ENCODE measurements at regions of chr2 and their contacts with region 1.

Region 1: DNA sequence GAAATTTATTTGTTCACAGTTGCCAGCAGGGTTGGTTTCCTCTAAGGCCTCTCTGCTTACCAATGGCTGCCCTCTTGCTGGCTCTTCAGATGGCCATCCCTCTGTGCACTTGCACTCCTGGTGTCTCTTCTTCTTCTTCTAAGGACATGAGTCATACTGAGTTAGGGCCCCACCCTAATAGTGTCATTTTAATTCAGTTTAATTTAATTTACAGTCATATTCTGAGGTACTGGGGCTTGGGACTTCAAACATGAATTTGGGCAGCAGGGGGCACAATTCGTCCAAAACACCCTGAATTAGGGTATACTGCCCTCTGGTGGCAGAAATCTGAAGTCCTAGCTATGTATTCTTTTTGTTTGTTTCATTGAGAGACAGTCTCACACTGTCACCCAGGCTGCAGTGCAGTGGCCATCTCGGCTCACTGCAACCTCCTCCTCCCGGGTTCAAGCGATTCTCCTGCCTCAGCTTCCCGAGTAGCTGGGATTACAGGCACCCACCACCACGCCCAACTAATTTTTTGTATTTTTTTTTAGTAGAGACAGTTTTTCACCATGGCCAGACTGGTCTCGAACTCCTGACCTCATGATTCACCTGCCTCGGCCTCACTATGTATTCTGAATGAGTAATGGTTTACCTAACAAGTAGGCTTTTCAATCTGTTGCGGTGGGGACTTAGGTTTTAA is 19.8 kb downstream of the SLC4A1AP start:
- DNase-seq: peak; percentile 78 to 82
- H3K4me3 ChIP-seq: no peak overlapping the region
- H3K27ac ChIP-seq: peak overlapping the region; percentile 98
- H3K4me1 ChIP-seq: peaks cover 44% of the 10 kb centered on the region
- H3K27me3 ChIP-seq: no peaks in the 10 kb centered on the region
- CTCF ChIP-seq: peak; percentile 100

Region 2: DNA sequence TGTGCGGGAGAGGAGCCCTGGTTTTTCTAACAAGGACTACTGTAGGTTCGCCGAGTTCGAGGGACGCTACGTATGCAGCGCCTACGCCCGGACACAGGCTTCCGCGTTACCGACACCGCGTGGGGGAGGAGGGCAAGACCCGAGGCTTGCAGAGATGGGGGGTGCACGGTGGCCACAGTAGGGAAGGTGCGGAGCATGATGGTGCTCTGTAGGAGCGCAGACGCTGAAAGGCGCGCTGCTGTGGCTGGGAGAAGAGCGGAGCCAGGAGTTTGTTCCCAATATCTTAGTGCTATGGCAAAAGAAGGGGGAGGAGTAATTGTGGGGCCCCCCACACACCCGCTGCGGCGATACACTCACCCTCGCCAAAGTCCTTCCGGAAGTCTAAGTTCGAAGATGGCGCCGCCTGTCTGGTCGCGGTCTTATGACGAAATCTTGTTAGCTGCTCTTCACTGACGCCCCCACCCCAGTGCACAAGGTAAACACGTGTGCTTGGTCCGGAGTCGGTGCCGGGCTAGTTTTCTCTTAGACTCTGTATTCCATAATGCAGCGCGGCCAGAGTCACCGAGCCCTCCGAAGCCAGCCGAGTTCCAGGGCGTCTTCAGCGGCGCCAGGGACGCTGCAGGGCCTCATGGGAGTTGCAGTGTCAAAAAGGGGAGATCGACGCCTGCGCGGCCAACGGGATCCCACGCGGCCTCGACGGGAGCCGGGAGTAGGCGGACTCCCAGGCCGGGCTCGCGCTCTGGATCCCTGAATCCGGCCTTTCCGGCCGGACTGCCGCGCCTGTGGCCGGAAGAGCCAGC is 326.9 kb before region 1 on chr2 and contains the start of gene GTF3C2:
- CTCF ChIA-PET with region 1: no interaction called
- POLR2A ChIA-PET with region 1: interaction called, 11 read pairs
- intact Hi-C with region 1: no loop called
- DNase-seq: peak; percentile 91 to 95
- H3K4me3 ChIP-seq: peak within 1 kb of the TSS; percentile 69
- H3K27ac ChIP-seq: peak within 1 kb of the TSS; percentile 90
- H3K4me1 ChIP-seq: peaks cover 31% of the 10 kb centered on the region
- H3K27me3 ChIP-seq: no peaks in the 10 kb centered on the region
- CTCF ChIP-seq: no peak
- total RNA-seq, gene GTF3C2: 57.5 and 69.8 TPM in 2 replicates

Region 3: DNA sequence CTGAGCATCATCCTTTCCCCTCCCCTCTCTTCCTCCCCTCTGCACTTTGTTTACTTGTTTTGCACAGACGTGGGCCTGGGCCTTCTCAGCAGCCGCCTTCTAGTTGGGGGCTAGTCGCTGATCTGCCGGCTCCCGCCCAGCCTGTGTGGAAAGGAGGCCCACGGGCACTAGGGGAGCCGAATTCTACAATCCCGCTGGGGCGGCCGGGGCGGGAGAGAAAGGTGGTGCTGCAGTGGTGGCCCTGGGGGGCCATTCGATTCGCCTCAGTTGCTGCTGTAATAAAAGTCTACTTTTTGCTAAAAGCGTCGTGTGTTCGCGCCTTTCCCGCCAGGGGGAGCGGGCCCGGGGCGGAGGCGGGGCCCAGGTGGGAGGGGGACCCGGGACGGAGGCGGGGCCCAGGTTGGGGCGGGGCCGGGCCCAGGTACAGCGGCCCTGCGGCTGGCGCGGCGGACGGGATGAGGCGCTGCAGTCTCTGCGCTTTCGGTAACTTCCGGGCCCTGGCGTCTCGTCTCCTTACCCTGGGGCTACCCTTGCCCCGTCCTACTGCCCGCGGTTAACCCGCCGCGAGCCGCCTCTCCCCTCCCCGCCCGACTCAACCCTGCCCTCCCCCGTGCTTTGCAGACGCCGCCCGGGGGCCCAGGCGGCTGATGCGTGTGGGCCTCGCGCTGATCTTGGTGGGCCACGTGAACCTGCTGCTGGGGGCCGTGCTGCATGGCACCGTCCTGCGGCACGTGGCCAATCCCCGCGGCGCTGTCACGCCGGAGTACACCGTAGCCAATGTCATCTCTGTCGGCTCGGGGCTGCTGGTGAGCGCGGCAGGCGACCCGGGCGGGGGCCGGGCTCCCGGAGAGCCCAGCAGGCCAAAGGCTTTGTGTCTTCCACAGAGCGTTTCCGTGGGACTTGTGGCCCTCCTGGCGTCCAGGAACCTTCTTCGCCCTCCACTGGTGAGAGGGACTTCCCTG is 241.3 kb before region 1 on chr2 and contains the start of gene KRTCAP3:
- CTCF ChIA-PET with region 1: no interaction called
- POLR2A ChIA-PET with region 1: interaction called, 14 read pairs
- intact Hi-C with region 1: no loop called
- DNase-seq: peak; percentile 69 to 86
- H3K4me3 ChIP-seq: peak within 1 kb of the TSS; percentile 79
- H3K27ac ChIP-seq: peak within 1 kb of the TSS; percentile 63
- H3K4me1 ChIP-seq: peaks cover 19% of the 10 kb centered on the region
- H3K27me3 ChIP-seq: no peaks in the 10 kb centered on the region
- CTCF ChIP-seq: peak; percentile 68
- total RNA-seq, gene KRTCAP3: 62.9 and 91.7 TPM in 2 replicates

Region 4: GRCh38 chr2:27715318-27716210 is 32.0 kb after region 1 on chr2:
- CTCF ChIA-PET with region 1: interaction called, 4 read pairs
- POLR2A ChIA-PET with region 1: interaction called, 5 read pairs
- intact Hi-C with region 1: loop called (anchors 2 kb)
- DNase-seq: peak; percentile 71 to 78
- H3K4me3 ChIP-seq: peak overlapping the region; percentile 80
- H3K27ac ChIP-seq: peak overlapping the region; percentile 94
- H3K4me1 ChIP-seq: peaks cover 89% of the 10 kb centered on the region
- H3K27me3 ChIP-seq: no peaks in the 10 kb centered on the region
- CTCF ChIP-seq: no peak

Region 5: DNA sequence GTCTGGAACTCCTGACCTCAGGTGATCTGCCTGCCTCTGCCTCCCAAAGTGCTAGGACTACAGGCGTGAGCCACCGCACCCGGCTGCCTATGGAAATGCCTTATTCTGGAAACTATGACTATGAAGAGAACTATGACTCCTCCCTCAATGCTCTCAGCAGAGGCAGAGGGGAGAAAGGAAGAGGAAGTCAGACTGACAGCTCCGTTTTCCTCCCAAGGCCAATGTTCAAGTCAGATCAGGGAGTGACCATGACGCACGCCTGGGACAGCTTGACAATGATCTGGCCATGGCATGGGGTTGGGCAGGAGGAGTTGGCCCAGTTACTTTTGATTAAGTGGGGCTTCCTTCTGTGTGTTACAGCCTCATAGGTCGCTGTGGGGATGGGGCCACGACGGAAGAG is 43.7 kb after region 1 on chr2:
- CTCF ChIA-PET with region 1: no interaction called
- POLR2A ChIA-PET with region 1: no interaction called
- intact Hi-C with region 1: no loop called
- DNase-seq: no peak
- H3K4me3 ChIP-seq: no peak overlapping the region
- H3K27ac ChIP-seq: no peak overlapping the region
- H3K4me1 ChIP-seq: peaks cover 47% of the 10 kb centered on the region
- H3K27me3 ChIP-seq: no peaks in the 10 kb centered on the region
- CTCF ChIP-seq: no peak

Region 6: DNA sequence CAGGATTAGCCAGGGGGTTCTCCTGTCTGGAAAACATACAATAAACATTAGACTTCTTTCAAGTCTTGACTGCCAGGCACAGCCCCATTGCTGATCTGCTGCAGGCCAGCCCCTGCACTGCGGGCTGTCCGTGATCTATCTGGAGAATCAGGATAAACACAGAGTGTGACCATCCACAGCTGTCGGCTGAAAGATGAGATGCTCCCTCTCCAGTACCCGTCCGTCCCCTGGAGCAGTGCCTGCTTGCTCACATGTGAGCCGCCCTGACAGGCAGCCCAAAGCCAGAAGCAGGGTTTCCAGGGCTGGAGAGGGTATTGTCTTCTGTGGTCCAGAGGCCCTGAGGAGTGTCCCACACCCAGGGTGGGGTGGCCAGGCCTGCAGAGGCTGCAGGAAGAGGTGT is 663.1 kb after region 1 on chr2:
- CTCF ChIA-PET with region 1: no interaction called
- POLR2A ChIA-PET with region 1: interaction called, 32 read pairs
- intact Hi-C with region 1: no loop called
- DNase-seq: no peak
- H3K4me3 ChIP-seq: no peak overlapping the region
- H3K27ac ChIP-seq: no peak overlapping the region
- H3K4me1 ChIP-seq: peaks cover 11% of the 10 kb centered on the region
- H3K27me3 ChIP-seq: no peaks in the 10 kb centered on the region
- CTCF ChIP-seq: no peak

Region 7: DNA sequence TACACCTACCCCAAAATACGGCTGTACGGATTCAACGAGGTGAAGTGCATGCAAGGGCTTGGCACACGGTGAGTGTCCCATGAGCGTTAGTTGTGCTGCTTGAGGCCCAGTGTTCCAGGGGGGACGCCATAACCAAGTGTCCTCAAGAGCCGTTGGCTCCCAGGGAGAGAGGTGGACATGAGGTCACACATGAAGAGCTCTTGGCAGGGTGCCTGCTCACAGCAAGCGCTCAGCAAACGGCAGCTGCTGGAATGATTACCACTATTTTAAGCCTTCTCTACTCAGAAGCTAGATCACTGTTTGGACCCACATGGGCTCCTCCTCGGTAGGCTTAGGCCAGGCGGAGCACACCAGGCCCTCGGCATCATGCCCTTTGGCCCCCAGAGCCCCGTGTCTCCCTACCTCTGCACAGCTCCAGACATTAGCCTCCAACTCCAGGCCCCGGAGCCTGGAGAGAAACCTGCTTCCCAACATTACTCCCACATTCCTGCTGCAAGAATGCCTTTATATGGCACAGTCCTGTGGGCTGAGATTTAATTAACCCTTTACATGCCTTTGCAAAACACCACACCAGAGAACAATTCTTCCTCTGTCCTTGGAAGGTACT is 999.7 kb after region 1 on chr2:
- CTCF ChIA-PET with region 1: interaction called, 10 read pairs
- POLR2A ChIA-PET with region 1: no interaction called
- intact Hi-C with region 1: no loop called
- DNase-seq: peak; percentile 77 to 84
- H3K4me3 ChIP-seq: no peak overlapping the region
- H3K27ac ChIP-seq: 0 out of 2 replicates have a peak overlapping the region, but pooled peaks have one; percentile 2
- H3K4me1 ChIP-seq: peaks cover 35% of the 10 kb centered on the region
- H3K27me3 ChIP-seq: no peaks in the 10 kb centered on the region
- CTCF ChIP-seq: no peak